ENCODE measurements at regions of chr2 and their contacts with region 1.

Region 1: DNA sequence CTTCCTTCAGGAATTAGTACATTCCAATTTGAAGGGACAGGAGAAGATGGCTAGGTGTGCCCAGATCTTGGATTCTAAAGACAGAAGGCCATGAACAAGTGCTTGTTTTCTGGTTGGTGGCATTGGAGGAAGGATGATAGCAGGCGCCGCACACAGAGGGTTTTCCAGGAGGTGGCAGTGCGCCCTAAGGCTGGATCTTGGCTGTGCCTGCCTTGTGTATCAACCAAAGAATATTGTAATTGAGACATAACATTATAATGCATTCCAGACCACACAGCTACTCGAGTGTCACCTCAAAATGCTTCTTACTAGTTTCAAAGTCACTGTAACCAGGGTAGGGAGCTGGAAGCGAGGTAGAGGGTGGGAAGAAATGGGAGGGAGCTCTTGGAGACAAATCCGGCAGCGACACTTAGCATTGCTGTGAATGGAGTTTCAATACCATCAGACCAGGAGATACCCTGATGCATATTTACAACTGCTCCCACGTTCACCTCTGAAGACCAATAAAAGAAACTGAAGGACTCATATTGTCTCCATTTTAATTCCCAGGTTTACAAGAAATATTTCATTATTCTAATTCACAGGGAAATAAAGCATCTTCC is 42.5 kb downstream of the CPO start:
- DNase-seq: peak; percentile 59
- ATAC-seq: peak; percentile 49
- H3K4me3 ChIP-seq: no peak overlapping the region
- H3K4me3 Mint-ChIP-seq: no peak overlapping the region
- H3K27ac ChIP-seq: no peak overlapping the region
- H3K27ac Mint-ChIP-seq: no peak overlapping the region
- H3K4me1 ChIP-seq: no peaks in the 10 kb centered on the region
- H3K4me1 Mint-ChIP-seq: no peaks in the 10 kb centered on the region
- H3K27me3 ChIP-seq: peaks cover 0 to 3% (median 0%) of the 10 kb centered on the region in 4 experiments
- H3K27me3 Mint-ChIP-seq: peaks cover 28% of the 10 kb centered on the region
- CTCF ChIP-seq: peak; percentile 64

Region 2: GRCh38 chr2:206996556-206997065 is 14.8 kb after region 1 on chr2:
- CTCF ChIA-PET with region 1: no interaction called
- POLR2A ChIA-PET with region 1: no interaction called
- intact Hi-C with region 1: no loop called
- DNase-seq: no peak
- ATAC-seq: no peak
- H3K4me3 ChIP-seq: no peak overlapping the region
- H3K4me3 Mint-ChIP-seq: no peak overlapping the region
- H3K27ac ChIP-seq: no peak overlapping the region
- H3K27ac Mint-ChIP-seq: no peak overlapping the region
- H3K4me1 ChIP-seq: no peaks in the 10 kb centered on the region
- H3K4me1 Mint-ChIP-seq: no peaks in the 10 kb centered on the region
- H3K27me3 ChIP-seq: peaks cover 0 to 4% (median 0%) of the 10 kb centered on the region in 4 experiments
- H3K27me3 Mint-ChIP-seq: peaks cover 37% of the 10 kb centered on the region
- CTCF ChIP-seq: no peak

Region 3: DNA sequence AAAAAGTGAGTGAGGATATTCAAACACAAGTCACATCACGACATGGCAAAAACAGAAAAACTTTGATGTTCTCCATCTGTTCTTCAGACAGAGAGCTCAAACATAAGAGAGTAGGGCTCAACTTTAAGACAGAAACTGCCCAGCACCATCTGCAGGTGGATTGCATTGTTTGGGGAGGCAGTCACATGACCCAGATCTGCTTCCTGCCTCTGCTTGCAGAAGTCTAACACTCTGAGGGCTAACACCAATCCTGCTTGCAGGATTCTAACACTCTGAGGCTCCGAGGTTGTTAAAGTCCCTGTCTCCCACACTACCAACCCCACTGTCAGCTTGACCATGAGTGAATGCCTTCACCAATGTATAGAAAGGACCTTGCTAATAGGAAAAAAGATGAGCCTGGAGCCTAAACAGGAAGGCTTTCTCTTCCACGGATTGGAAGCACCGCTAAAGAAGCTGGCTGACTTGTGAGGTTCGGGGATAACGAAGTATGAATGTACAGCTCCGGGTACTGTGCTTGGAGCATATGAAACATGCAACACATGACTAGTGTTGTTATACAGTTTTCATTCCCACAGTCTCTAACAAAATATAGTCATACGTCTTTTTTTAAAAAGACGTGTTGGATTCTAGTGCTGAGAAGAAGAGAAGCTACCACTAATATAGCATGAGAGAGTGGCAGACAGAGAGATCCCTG is 371.3 kb after region 1 on chr2:
- CTCF ChIA-PET with region 1: no interaction called
- POLR2A ChIA-PET with region 1: no interaction called
- intact Hi-C with region 1: loop called (anchors 5 kb)
- DNase-seq: peak; percentile 35
- ATAC-seq: no peak
- H3K4me3 ChIP-seq: no peak overlapping the region
- H3K4me3 Mint-ChIP-seq: no peak overlapping the region
- H3K27ac ChIP-seq: no peak overlapping the region
- H3K27ac Mint-ChIP-seq: no peak overlapping the region
- H3K4me1 ChIP-seq: peaks cover 0 to 2% of the 10 kb centered on the region in 2 donors
- H3K4me1 Mint-ChIP-seq: peaks cover 3% of the 10 kb centered on the region
- H3K27me3 ChIP-seq: no peaks in the 10 kb centered on the region
- H3K27me3 Mint-ChIP-seq: no peaks in the 10 kb centered on the region
- CTCF ChIP-seq: no peak

Measured in B cell (primary cell).